ENCODE measurements at regions of chr16 and their contacts with region 1.

Region 1: GRCh38 chr16:64089697-64090096 is 1032.2 kb downstream of the CDH11 start:
- DNase-seq: peak in 1 of 2 experiments; percentile 38
- H3K4me3 ChIP-seq: no peak overlapping the region
- H3K4me3 Mint-ChIP-seq: no peak overlapping the region
- H3K27ac Mint-ChIP-seq: no peak overlapping the region
- H3K4me1 ChIP-seq: no peaks in the 10 kb centered on the region
- H3K4me1 Mint-ChIP-seq: no peaks in the 10 kb centered on the region
- H3K27me3 ChIP-seq: no peaks in the 10 kb centered on the region
- H3K27me3 Mint-ChIP-seq: peaks cover 2% of the 10 kb centered on the region
- CTCF ChIP-seq: peak; percentile 52 to 63

Region 2: DNA sequence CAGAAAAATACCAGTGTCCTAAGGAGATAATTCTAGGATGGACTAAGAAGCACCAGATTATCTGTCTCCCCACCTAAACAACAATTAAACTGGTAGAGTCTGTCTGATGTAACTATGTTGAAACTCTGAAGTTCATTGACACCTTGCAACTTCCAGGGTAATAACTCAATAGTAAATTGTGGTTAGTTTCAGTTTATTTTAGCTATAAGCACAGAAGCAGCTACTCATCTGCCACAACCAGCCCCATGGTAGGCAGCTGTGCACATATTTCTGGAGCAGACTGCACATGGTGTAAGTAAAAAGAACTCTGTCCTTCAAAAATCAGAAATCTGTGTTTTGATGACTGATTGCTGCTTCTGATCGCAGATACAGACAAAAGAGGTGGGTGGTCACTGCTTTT is 180.1 kb after region 1 on chr16:
- CTCF ChIA-PET with region 1: no interaction called
- POLR2A ChIA-PET with region 1: no interaction called
- intact Hi-C with region 1: no loop called
- DNase-seq: no peak
- H3K4me3 ChIP-seq: no peak overlapping the region
- H3K4me3 Mint-ChIP-seq: no peak overlapping the region
- H3K27ac Mint-ChIP-seq: no peak overlapping the region
- H3K4me1 ChIP-seq: no peaks in the 10 kb centered on the region
- H3K4me1 Mint-ChIP-seq: no peaks in the 10 kb centered on the region
- H3K27me3 ChIP-seq: no peaks in the 10 kb centered on the region
- H3K27me3 Mint-ChIP-seq: peaks cover 2% of the 10 kb centered on the region
- CTCF ChIP-seq: no peak

Region 3: DNA sequence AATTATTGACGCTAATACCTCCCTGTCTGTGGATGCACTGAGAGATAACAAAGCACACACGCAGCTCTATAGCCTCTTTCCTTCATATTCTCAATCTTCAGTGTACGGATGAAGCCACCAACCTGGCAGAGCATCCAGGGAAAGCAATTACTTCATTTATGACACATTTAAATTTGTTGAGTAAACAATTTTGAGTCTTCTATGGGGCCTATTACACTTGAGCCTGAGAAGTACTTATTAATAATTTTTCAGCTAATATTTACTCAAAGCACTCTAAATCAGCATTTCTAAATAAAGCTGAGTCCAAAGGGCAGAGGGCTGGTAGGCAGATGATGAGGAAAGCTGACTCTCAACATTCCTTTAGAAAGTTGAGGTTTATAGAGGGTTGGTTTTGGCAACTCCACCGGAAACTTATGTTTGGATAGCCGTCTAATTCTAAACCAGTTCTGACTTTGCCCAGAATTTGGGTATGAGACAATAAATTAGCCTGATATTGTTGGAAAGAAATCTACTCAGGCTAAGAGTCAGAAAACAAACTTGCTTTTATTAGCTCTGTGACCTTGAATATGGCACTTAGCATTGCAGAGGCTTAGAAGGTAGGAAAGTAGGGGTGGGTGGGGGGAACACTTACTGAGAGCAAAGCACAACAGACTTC is 388.7 kb after region 1 on chr16:
- CTCF ChIA-PET with region 1: no interaction called
- POLR2A ChIA-PET with region 1: no interaction called
- intact Hi-C with region 1: loop called (anchors 10 kb)
- DNase-seq: peak; percentile 73 to 76
- H3K4me3 ChIP-seq: no peak overlapping the region
- H3K4me3 Mint-ChIP-seq: peak overlapping the region; percentile 15
- H3K27ac Mint-ChIP-seq: peak overlapping the region; percentile 12
- H3K4me1 ChIP-seq: peaks cover 32% of the 10 kb centered on the region
- H3K4me1 Mint-ChIP-seq: peaks cover 35% of the 10 kb centered on the region
- H3K27me3 ChIP-seq: no peaks in the 10 kb centered on the region
- H3K27me3 Mint-ChIP-seq: no peaks in the 10 kb centered on the region
- CTCF ChIP-seq: no peak

Region 4: GRCh38 chr16:64545768-64546167 is 456.1 kb after region 1 on chr16:
- CTCF ChIA-PET with region 1: no interaction called
- POLR2A ChIA-PET with region 1: no interaction called
- intact Hi-C with region 1: loop called (anchors 10 kb)
- DNase-seq: no peak
- H3K4me3 ChIP-seq: no peak overlapping the region
- H3K4me3 Mint-ChIP-seq: no peak overlapping the region
- H3K27ac Mint-ChIP-seq: no peak overlapping the region
- H3K4me1 ChIP-seq: no peaks in the 10 kb centered on the region
- H3K4me1 Mint-ChIP-seq: no peaks in the 10 kb centered on the region
- H3K27me3 ChIP-seq: no peaks in the 10 kb centered on the region
- H3K27me3 Mint-ChIP-seq: peaks cover 2% of the 10 kb centered on the region
- CTCF ChIP-seq: no peak